Left ventricle myocardium superior (tissue), 1 donor: ENCODE measurements at regions of chr3 and their contacts with region 1.

Region 1: GRCh38 chr3:158384019-158384418 is 187.0 kb upstream of the MLF1 start:
- DNase-seq: no peak
- ATAC-seq: no peak

Region 2: GRCh38 chr3:158127250-158128219 is 256.5 kb before region 1 on chr3:
- intact Hi-C with region 1: no loop called
- DNase-seq: no peak
- ATAC-seq: no peak

Region 3: GRCh38 chr3:158267015-158267414 is 117.0 kb before region 1 on chr3:
- intact Hi-C with region 1: loop called (anchors 5 kb)
- DNase-seq: no peak
- ATAC-seq: no peak

Region 4: GRCh38 chr3:158330870-158331269 is 53.1 kb before region 1 on chr3:
- intact Hi-C with region 1: no loop called
- DNase-seq: no peak
- ATAC-seq: no peak

Region 5: DNA sequence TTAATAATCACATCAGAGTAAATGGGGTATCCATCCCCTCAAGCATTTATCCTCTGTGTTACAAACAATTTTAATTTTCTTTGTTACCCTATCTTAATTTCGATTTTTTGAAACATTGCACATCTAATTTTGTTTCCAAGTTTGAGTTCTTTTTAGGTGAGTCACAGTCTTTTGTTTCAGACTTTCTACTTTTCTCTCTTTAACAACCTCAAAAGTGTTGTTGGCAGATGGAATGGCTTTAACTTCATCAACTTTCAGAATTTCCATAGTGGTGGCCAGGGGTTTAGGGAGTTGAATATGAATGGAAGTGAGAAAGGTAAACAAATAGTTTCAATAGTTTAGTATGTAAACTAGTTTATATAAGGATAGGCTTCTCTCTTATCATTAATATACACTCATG is 36.1 kb before region 1 on chr3:
- intact Hi-C with region 1: no loop called
- DNase-seq: no peak
- ATAC-seq: no peak